Transverse colon (tissue), 4 donors: ENCODE measurements at regions of chr5 and their contacts with region 1.

Region 1: GRCh38 chr5:147453875-147454814 is 55.7 kb downstream of the DPYSL3 start:
- DNase-seq: peak; percentile 84
- H3K4me3 ChIP-seq: peak overlapping the region; percentile 56 to 77 (median 62)
- H3K27ac ChIP-seq: peak overlapping the region; percentile 81 to 97 (median 92)
- H3K4me1 ChIP-seq: peaks cover 4 to 33% (median 16%) of the 10 kb centered on the region in 4 donors
- H3K27me3 ChIP-seq: peaks cover 46% of the 10 kb centered on the region
- CTCF ChIP-seq: peak; percentile 84 to 94 (median 88)
- EP300 ChIP-seq: no peak
- POLR2A ChIP-seq: no peak

Region 2: DNA sequence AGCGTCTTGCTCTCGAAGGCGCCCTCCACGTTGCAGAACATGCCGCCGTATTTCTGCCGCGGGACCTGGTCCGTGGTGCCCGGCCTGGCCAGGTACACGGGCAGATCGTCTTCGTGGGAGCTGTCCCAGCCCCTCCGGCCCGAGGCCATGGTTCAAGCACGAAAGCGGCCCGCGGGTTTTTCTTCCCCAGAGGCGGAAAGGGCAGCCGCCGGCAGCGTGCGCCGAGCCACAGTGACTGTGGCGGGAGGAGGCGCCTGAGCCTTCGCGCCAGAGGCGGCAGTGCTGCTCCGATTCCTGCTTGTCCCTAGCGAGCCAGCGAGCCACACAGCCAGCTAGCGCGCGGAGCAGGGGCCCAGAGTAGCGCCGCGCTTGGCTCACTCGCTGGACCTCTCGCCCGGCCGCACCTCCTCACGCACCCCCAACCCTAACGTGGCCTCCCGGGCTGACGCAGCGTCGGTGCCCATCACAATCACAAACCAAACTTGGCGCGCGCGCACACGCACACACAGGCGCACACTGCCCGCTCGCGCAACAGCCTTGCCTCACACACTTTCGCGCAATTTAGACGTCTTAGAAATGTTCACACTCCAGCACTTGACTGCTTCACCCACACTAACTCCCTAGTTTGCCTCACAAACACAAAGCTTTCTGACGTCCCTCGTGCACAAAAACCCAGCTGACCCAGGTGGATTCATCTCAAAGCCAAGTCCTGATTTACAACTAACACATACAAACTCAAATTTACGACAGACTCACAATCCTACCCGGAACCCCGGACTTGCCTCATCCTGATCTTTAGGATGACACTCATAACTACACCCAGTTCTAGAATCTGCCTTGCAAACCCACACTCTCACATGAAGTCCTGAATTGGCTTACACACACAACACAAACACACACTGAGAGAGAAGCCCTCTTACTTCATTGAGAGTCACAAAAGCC is 55.8 kb after region 1 on chr5 and contains the start of gene DPYSL3:
- in situ Hi-C with region 1: no loop called
- intact Hi-C with region 1: loop called (anchors 2 kb)
- DNase-seq: peak; percentile 54
- H3K4me3 ChIP-seq: peak within 1 kb of the TSS; percentile 48 to 63 (median 50)
- H3K27ac ChIP-seq: peak within 1 kb of the TSS; percentile 81 to 87 (median 86)
- H3K4me1 ChIP-seq: peaks cover 0 to 8% (median 2%) of the 10 kb centered on the region in 4 donors
- H3K27me3 ChIP-seq: peaks cover 12% of the 10 kb centered on the region
- CTCF ChIP-seq: peak in 3 of 5 experiments; percentile 20 to 32 (median 20)
- EP300 ChIP-seq: no peak
- POLR2A ChIP-seq: peak; percentile 61
- total RNA-seq, gene DPYSL3: 27.6 to 107 (median 31.4) TPM

Region 3: GRCh38 chr5:147628058-147628895 is 174.1 kb after region 1 on chr5:
- in situ Hi-C with region 1: no loop called
- intact Hi-C with region 1: no loop called
- DNase-seq: peak; percentile 61
- H3K4me3 ChIP-seq: no peak overlapping the region
- H3K27ac ChIP-seq: no peak overlapping the region
- H3K4me1 ChIP-seq: no peaks in the 10 kb centered on the region
- H3K27me3 ChIP-seq: no peaks in the 10 kb centered on the region
- CTCF ChIP-seq: peak; percentile 65 to 79 (median 68)
- EP300 ChIP-seq: no peak
- POLR2A ChIP-seq: no peak

Region 4: GRCh38 chr5:147835386-147835798 is 381.2 kb after region 1 on chr5:
- in situ Hi-C with region 1: no loop called
- intact Hi-C with region 1: no loop called
- DNase-seq: no peak
- H3K4me3 ChIP-seq: no peak overlapping the region
- H3K27ac ChIP-seq: no peak overlapping the region
- H3K4me1 ChIP-seq: peaks cover 0 to 57% (median 21%) of the 10 kb centered on the region in 4 donors
- H3K27me3 ChIP-seq: no peaks in the 10 kb centered on the region
- CTCF ChIP-seq: no peak
- EP300 ChIP-seq: no peak
- POLR2A ChIP-seq: no peak